ENCODE measurements at regions of chr1 and their contacts with region 1.

Region 1: GRCh38 chr1:231855926-231856325 is 229.3 kb downstream of the DISC1 start:
- DNase-seq: no peak
- ATAC-seq: no peak
- H3K4me3 ChIP-seq: no peak overlapping the region
- H3K4me3 Mint-ChIP-seq: no peak overlapping the region
- H3K27ac ChIP-seq: no peak overlapping the region
- H3K27ac Mint-ChIP-seq: no peak overlapping the region
- H3K4me1 ChIP-seq: peaks cover 0 to 2% of the 10 kb centered on the region in 2 donors
- H3K4me1 Mint-ChIP-seq: peaks cover 10% of the 10 kb centered on the region
- H3K27me3 ChIP-seq: no peaks in the 10 kb centered on the region
- H3K27me3 Mint-ChIP-seq: no peaks in the 10 kb centered on the region
- CTCF ChIP-seq: no peak

Region 2: DNA sequence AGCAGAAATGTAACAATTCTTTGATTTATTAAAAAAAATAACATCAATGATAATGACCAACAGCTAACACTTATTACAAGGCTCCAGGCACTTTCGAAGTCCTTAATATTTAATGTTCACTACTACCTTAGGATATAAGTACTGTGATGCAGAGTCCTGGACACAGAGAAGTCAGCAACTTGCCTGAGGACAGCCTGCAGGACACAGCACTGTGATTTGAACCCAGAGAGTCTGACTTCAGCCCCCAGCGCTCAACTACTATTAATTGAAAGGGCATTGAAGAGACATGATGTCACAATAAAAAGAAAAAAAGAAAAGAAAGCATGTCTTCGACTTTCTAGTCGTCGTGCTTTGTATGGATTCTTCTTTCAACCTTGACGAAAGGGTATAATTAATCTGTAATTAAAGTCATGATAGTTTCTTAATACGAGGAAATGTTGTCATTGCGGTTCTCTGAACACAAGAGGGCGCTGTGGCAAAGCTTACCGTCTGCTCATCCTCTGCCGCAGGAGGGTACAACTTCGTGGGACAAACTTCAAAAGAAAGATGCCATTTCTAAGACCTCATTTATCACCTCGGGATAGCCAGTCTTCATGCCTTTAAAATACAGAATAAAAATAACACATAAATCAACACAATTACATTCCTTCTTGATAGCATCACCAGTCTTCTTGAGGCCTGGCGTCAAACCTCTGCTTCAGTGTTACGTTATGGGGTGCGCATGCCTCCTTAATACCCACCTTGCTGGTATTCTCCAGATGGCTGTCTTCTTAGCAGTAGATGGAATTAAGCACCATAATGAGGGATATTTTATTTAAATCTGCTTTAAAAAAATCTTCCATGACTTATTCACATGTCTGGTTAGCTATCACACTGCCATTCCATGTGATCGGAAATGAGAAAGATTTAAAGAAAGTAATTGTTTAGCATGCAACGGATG is 10.7 kb after region 1 on chr1:
- CTCF ChIA-PET with region 1: interaction called, 11 read pairs
- POLR2A ChIA-PET with region 1: no interaction called
- intact Hi-C with region 1: no loop called
- DNase-seq: peak; percentile 54
- ATAC-seq: no peak
- H3K4me3 ChIP-seq: no peak overlapping the region
- H3K4me3 Mint-ChIP-seq: no peak overlapping the region
- H3K27ac ChIP-seq: no peak overlapping the region
- H3K27ac Mint-ChIP-seq: no peak overlapping the region
- H3K4me1 ChIP-seq: peaks cover 0 to 9% of the 10 kb centered on the region in 2 donors
- H3K4me1 Mint-ChIP-seq: peaks cover 15% of the 10 kb centered on the region
- H3K27me3 ChIP-seq: no peaks in the 10 kb centered on the region
- H3K27me3 Mint-ChIP-seq: no peaks in the 10 kb centered on the region
- CTCF ChIP-seq: peak; percentile 91

Measured in B cell (primary cell).